Tibial artery (tissue), 4 donors: ENCODE measurements at regions of chr5 and their contacts with region 1.

Region 1: DNA sequence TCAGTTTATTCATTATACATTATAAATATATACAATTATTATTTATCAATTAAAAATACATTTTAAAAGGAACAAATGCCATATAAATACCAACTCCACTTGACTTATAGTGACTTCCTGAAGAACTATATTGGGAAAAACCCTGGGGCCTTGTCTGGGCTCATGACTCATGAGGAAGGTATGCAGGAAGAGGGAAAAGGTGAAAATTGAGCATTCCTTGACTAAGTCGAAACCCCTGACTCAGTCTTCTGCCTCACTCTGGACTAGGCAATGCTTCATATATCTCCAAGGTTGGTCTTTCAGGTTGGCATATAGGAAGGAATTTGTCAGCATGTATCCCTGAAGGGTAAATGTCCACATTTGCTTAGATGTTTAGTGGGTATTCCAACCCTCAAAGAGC is 78.5 kb downstream of the SH3TC2 start:
- DNase-seq: no peak
- H3K4me3 ChIP-seq: no peak overlapping the region
- H3K27ac ChIP-seq: no peak overlapping the region
- H3K4me1 ChIP-seq: peaks cover 0 to 16% (median 4%) of the 10 kb centered on the region in 4 donors
- H3K27me3 ChIP-seq: no peaks in the 10 kb centered on the region
- CTCF ChIP-seq: no peak

Region 2: GRCh38 chr5:148682058-148683026 is 302.0 kb before region 1 on chr5:
- intact Hi-C with region 1: no loop called
- DNase-seq: no peak
- H3K4me3 ChIP-seq: no peak overlapping the region
- H3K27ac ChIP-seq: no peak overlapping the region
- H3K4me1 ChIP-seq: peaks cover 0 to 6% (median 2%) of the 10 kb centered on the region in 4 donors
- H3K27me3 ChIP-seq: no peaks in the 10 kb centered on the region
- CTCF ChIP-seq: no peak

Region 3: DNA sequence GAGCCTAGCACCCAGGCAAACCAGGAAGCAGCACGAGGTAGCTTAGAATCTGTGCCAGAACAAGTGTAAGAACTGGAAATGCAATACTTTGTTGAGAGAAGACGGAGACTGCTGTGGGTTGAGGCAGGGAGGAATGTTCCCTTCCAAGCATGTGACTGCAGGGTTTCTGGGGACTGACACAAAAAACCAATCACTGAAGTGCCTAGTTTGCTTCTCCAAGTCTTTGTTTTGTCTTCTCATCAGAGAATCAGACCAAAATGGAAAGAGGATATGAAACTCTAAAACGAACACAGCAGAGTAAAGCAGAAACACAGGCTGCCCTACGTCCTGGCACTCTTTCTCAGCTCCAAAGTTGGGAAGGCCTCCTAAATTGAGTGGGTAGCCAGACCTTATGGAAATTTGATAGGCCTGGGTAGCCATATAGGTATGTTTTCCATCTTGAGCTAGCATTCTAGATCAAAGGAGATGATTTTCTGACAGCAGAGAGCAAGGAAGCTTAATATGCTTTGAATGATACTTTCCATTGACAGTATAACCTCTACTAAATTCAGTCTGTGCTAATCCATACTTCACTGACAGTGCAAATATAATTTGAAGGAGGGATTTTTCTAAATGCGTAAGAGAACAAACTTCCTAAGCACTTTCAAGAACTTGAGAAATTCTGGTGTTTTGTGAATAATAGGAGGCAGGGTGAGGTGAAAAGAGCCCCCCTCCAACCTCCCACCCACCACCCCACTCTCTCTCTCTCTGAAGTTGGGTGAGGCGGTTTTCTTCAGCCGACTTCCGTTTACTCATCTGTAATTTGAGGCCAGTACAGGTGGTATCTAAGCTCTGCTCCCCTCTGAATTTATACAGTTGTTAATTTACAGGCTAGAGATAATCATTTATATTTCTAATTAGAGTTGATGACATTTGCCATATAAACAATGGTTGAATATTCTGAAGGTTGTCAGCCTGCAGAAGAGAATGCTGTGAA is 152.5 kb before region 1 on chr5:
- intact Hi-C with region 1: loop called (anchors 10 kb)
- DNase-seq: peak in 1 of 2 donors; percentile 49
- H3K4me3 ChIP-seq: no peak overlapping the region
- H3K27ac ChIP-seq: no peak overlapping the region
- H3K4me1 ChIP-seq: peaks cover 0 to 39% (median 3%) of the 10 kb centered on the region in 4 donors
- H3K27me3 ChIP-seq: no peaks in the 10 kb centered on the region
- CTCF ChIP-seq: no peak